ENCODE measurements at regions of chr11 and their contacts with region 1.

Region 1: GRCh38 chr11:4050138-4050537 is 44.5 kb upstream of the RRM1 start:
- DNase-seq: no peak
- ATAC-seq: no peak
- H3K4me3 ChIP-seq: no peak overlapping the region
- H3K4me3 Mint-ChIP-seq: no peak overlapping the region
- H3K27ac ChIP-seq: no peak overlapping the region
- H3K27ac Mint-ChIP-seq: no peak overlapping the region
- H3K4me1 ChIP-seq: no peaks in the 10 kb centered on the region
- H3K4me1 Mint-ChIP-seq: peaks cover 7% of the 10 kb centered on the region
- H3K27me3 ChIP-seq: no peaks in the 10 kb centered on the region
- H3K27me3 Mint-ChIP-seq: no peaks in the 10 kb centered on the region
- CTCF ChIP-seq: no peak

Region 2: DNA sequence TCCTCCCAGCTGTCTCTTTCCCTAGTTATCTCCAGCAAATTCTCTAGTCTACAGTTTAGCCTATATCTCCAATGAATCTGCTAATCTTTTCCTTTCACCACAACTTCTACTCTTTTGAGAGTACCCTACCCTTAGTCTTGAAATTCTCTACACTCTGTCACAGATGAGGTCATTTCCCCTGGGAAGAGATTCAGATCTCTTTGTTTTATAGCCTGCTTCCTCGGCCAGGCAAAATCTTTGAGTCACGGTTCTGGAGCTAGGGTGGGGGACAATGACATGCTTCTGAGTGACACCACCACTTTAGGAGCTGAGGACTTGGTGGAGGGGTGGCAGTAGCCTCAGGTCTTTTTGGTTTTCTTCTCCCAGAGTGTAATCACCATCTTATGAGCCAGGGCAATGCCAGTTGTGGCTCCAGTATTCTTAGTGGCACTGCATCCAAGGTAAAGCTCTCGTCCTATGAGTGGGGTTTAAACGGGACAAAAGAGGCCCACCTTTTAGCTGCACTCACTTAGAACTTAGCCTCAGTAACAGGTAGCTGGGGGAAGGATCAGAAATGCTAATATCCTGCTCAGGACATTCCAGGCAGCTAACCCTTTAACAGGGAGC is 54.1 kb before region 1 on chr11:
- CTCF ChIA-PET with region 1: interaction called, 3 read pairs
- POLR2A ChIA-PET with region 1: no interaction called
- intact Hi-C with region 1: loop called (anchors 10 kb)
- DNase-seq: no peak
- ATAC-seq: no peak
- H3K4me3 ChIP-seq: no peak overlapping the region
- H3K4me3 Mint-ChIP-seq: peak overlapping the region; percentile 30
- H3K27ac ChIP-seq: no peak overlapping the region
- H3K27ac Mint-ChIP-seq: no peak overlapping the region
- H3K4me1 ChIP-seq: peaks cover 6 to 10% of the 10 kb centered on the region in 2 donors
- H3K4me1 Mint-ChIP-seq: peaks cover 22% of the 10 kb centered on the region
- H3K27me3 ChIP-seq: no peaks in the 10 kb centered on the region
- H3K27me3 Mint-ChIP-seq: no peaks in the 10 kb centered on the region
- CTCF ChIP-seq: no peak

Region 3: GRCh38 chr11:4060182-4060923 is 10.2 kb after region 1 on chr11:
- CTCF ChIA-PET with region 1: no interaction called
- POLR2A ChIA-PET with region 1: no interaction called
- intact Hi-C with region 1: no loop called
- DNase-seq: no peak
- ATAC-seq: no peak
- H3K4me3 ChIP-seq: no peak overlapping the region
- H3K4me3 Mint-ChIP-seq: no peak overlapping the region
- H3K27ac ChIP-seq: no peak overlapping the region
- H3K27ac Mint-ChIP-seq: no peak overlapping the region
- H3K4me1 ChIP-seq: peaks cover 14 to 18% of the 10 kb centered on the region in 2 donors
- H3K4me1 Mint-ChIP-seq: peaks cover 26% of the 10 kb centered on the region
- H3K27me3 ChIP-seq: no peaks in the 10 kb centered on the region
- H3K27me3 Mint-ChIP-seq: no peaks in the 10 kb centered on the region
- CTCF ChIP-seq: no peak

Region 4: GRCh38 chr11:4167758-4168157 is 117.6 kb after region 1 on chr11:
- CTCF ChIA-PET with region 1: no interaction called
- POLR2A ChIA-PET with region 1: no interaction called
- intact Hi-C with region 1: no loop called
- DNase-seq: no peak
- ATAC-seq: no peak
- H3K4me3 ChIP-seq: no peak overlapping the region
- H3K4me3 Mint-ChIP-seq: no peak overlapping the region
- H3K27ac ChIP-seq: no peak overlapping the region
- H3K27ac Mint-ChIP-seq: no peak overlapping the region
- H3K4me1 ChIP-seq: no peaks in the 10 kb centered on the region
- H3K4me1 Mint-ChIP-seq: no peaks in the 10 kb centered on the region
- H3K27me3 ChIP-seq: no peaks in the 10 kb centered on the region
- H3K27me3 Mint-ChIP-seq: peaks cover 4% of the 10 kb centered on the region
- CTCF ChIP-seq: no peak

Measured in B cell (primary cell).